HCT116 (cell line): ENCODE measurements at regions of chr12 and their contacts with region 1.

Region 1: GRCh38 chr12:66514581-66514980 is 164.3 kb downstream of the GRIP1 start:
- DNase-seq: no peak
- ATAC-seq: no peak
- H3K4me3 ChIP-seq: no peak overlapping the region
- H3K27ac ChIP-seq: no peak overlapping the region
- H3K4me1 ChIP-seq: peaks cover 0 to 4% of the 10 kb centered on the region in 2 experiments; a peak in 1 of 4 replicates
- H3K27me3 ChIP-seq: peaks cover 41% of the 10 kb centered on the region; the same call in 1 of the 2 replicates
- CTCF ChIP-seq: no peak
- POLR2A ChIP-seq: no peak
- RAD21 ChIP-seq: no peak

Region 2: DNA sequence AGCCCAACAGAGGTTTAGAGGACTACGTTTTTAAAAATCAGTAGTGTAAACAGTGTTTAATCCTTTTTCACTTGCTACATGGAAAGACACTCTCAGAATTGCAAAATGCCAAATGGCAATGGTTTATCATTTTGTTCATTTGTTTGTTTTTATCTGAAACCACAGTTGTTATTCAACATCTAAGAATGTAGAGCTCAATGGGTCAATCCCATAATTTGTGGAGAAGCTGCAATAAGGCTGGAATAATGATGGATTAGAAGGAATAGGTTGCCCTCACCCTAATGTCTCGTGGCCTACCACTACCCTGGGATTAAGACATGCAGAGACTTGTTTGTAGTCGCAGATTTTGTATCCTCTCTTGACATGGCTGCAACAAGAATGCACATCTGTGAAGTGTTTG is 499.8 kb before region 1 on chr12:
- CTCF ChIA-PET with region 1: no interaction called
- POLR2A ChIA-PET with region 1: no interaction called
- RAD21 ChIA-PET with region 1: no interaction called
- intact Hi-C with region 1: loop called (anchors 10 kb)
- DNase-seq: no peak
- ATAC-seq: no peak
- H3K4me3 ChIP-seq: no peak overlapping the region
- H3K27ac ChIP-seq: no peak overlapping the region
- H3K4me1 ChIP-seq: no peaks in the 10 kb centered on the region
- H3K27me3 ChIP-seq: no peaks in the 10 kb centered on the region
- CTCF ChIP-seq: no peak
- POLR2A ChIP-seq: no peak
- RAD21 ChIP-seq: no peak

Region 3: DNA sequence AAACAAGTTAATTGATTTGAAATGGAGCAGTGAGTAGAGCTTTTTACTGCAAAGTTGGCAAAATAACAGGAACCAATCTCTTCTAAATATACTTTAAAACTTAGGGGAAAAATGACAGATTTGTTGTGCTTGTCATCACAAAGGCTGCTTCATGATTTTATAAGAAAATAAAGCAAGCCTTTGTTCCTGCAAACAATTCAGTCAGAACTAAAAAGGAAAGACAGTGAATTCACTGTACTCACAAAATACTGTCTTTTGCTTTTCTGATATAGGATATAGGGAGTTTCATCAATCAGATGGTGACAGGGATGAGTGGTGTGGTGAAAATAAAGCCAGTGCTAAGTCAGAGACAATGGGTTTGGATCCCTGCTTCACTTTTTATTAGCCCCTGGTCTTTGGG is 86.3 kb before region 1 on chr12:
- CTCF ChIA-PET with region 1: no interaction called
- POLR2A ChIA-PET with region 1: no interaction called
- RAD21 ChIA-PET with region 1: no interaction called
- intact Hi-C with region 1: no loop called
- DNase-seq: no peak
- ATAC-seq: no peak
- H3K4me3 ChIP-seq: no peak overlapping the region
- H3K27ac ChIP-seq: no peak overlapping the region
- H3K4me1 ChIP-seq: no peaks in the 10 kb centered on the region
- H3K27me3 ChIP-seq: peaks cover 45% of the 10 kb centered on the region
- CTCF ChIP-seq: no peak
- POLR2A ChIP-seq: no peak
- RAD21 ChIP-seq: no peak

Region 4: GRCh38 chr12:66538970-66539369 is 24.4 kb after region 1 on chr12:
- CTCF ChIA-PET with region 1: no interaction called
- POLR2A ChIA-PET with region 1: no interaction called
- RAD21 ChIA-PET with region 1: no interaction called
- intact Hi-C with region 1: no loop called
- DNase-seq: no peak
- ATAC-seq: no peak
- H3K4me3 ChIP-seq: no peak overlapping the region
- H3K27ac ChIP-seq: no peak overlapping the region
- H3K4me1 ChIP-seq: peaks cover 0 to 5% of the 10 kb centered on the region in 2 experiments; a peak in 1 of 4 replicates
- H3K27me3 ChIP-seq: peaks cover 47% of the 10 kb centered on the region
- CTCF ChIP-seq: no peak
- POLR2A ChIP-seq: no peak
- RAD21 ChIP-seq: no peak